Aorta (tissue), 5 donors: ENCODE measurements at regions of chr12 and their contacts with region 1.

Region 1: DNA sequence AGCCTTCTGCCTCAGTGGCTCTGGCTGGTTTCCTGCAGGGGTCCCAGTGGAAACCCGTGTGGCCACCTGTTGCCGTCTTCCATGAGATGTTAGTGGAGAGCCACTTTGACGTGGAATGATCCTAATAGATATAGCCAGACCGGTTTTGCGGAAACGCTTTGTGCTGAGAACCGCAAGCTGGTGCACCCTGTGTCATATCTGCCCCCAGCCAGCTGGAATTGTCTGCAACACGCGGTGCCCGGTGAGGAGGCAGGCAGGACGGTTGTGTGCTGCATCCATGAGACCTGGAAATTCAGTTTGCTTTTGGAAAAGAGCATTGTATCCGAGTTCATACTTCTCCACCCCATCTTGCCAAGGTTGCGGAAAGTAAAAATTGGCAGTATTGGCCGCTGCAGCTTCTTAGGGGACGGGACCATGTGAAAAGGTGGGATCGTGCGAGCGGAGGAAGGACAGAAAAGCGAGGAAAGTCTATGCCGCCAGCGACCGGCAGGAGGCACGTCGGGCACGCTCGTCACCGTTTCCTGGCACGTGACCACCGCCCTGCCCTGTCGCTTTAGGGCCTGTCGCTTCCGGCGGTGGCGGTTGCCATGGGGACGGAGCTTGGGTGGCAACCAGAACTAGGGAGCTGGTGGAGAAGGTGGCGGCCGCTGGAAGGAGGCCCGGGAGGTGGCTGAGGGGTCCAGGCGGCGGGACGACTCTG is at the start of gene CFAP251:
- DNase-seq: peak; percentile 99
- ATAC-seq: peak; percentile 97
- H3K4me3 ChIP-seq: peak within 1 kb of the TSS; percentile 1 to 46
- H3K27ac ChIP-seq: peak within 1 kb of the TSS; percentile 15 to 64
- H3K4me1 ChIP-seq: peaks cover 0 to 3% of the 10 kb centered on the region in 2 donors
- H3K27me3 ChIP-seq: no peaks in the 10 kb centered on the region
- total RNA-seq, gene CFAP251: 2.8 to 3.9 TPM

Region 2: GRCh38 chr12:122021822-122022526 is 103.8 kb after region 1 on chr12 and contains the start of gene BCL7A:
- intact Hi-C with region 1: loop called (anchors 2 to 5 kb)
- DNase-seq: peak; percentile 67 to 86
- ATAC-seq: peak; percentile 77
- H3K4me3 ChIP-seq: peak within 1 kb of the TSS; percentile 96
- H3K27ac ChIP-seq: peak within 1 kb of the TSS; percentile 62 to 80
- H3K4me1 ChIP-seq: peaks cover 0 to 1% of the 10 kb centered on the region in 2 donors
- H3K27me3 ChIP-seq: no peaks in the 10 kb centered on the region
- total RNA-seq, gene BCL7A: 6.2 to 6.3 TPM

Region 3: DNA sequence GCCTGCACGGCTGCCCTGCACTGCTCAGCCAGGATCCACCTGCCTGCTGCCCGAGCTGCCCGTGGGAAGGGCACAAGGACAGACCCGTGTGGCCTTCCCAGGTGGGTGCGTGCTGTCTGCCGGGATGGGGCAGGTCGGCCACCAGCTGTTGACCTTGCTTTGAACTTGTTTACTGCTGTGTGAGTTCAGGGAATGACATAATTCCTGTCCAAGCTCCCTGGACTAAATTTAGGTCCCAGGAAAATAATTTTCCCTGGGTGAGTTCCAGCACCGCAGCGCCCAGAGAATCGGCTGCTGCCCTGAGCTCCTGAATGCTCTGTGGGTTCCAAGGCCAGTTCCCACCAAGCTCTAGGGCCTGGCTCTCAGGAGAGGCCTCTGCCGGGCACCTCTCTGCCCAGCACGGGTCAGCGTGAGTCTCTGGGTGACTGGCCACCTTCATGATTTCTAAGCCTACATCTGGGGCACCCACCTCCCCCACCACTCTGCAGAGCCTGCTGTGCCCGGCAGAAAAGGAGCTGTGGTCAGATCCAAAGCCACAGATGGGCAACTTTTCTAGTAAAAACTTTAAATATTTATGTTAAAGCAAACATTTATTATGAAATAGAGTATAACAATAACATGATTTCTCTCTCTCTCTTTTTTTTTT is 133.2 kb after region 1 on chr12:
- intact Hi-C with region 1: loop called in 1 of 2 experiments (anchors 5 kb)
- DNase-seq: peak in 1 of 2 donors; percentile 59
- ATAC-seq: peak; percentile 61
- H3K4me3 ChIP-seq: no peak overlapping the region
- H3K27ac ChIP-seq: peak overlapping the region; percentile 7 to 73
- H3K4me1 ChIP-seq: no peaks in the 10 kb centered on the region
- H3K27me3 ChIP-seq: no peaks in the 10 kb centered on the region

Region 4: DNA sequence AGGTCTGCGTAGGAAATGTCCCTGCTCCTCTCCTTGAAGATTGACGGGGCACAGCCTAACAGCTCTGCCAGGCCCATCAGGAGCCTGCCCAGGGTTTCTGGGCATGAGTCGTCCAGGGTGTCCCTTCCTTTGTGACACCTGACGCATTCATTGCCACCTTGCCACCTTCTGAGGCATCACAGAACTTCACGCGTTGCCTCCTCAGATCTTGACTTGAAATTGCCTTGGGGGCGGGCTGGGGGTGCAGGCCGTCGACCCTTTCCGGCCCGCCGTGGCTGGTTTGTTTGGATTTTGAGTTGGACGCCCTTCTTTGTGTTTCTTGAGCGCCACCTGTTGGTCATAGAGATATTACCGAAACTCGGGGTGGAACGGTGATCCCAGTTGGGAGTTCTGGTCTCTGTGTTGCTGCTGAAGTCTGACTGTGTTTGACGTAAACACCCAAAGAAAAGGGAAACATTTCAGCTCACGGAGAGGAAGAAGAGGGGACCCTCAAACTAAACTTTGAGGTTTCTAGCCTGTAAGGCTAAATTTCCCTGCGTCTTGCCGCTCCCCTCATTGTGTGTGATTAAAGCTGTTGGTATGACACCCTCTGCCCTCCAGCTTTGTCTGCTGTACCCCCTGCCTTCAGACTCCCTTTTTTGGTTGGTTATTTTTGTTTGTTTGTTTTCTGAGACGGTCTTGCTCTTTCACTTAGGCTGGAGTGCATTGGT is 205.1 kb after region 1 on chr12:
- intact Hi-C with region 1: loop called (anchors 2 to 10 kb)
- DNase-seq: peak; percentile 76 to 82
- ATAC-seq: peak; percentile 77
- H3K4me3 ChIP-seq: no peak overlapping the region
- H3K27ac ChIP-seq: no peak overlapping the region
- H3K4me1 ChIP-seq: peaks cover 0 to 3% of the 10 kb centered on the region in 2 donors
- H3K27me3 ChIP-seq: no peaks in the 10 kb centered on the region